CD8-positive, alpha-beta T cell (primary cell): ENCODE measurements at regions of chr19 and their contacts with region 1.

Region 1: GRCh38 chr19:4633140-4633967 is 6.0 kb upstream of the TNFAIP8L1 start:
- DNase-seq: peak in 5 of 9 experiments; percentile 30 to 69 (median 47)
- ATAC-seq: no peak
- H3K4me3 ChIP-seq: no peak overlapping the region
- H3K4me3 Mint-ChIP-seq: no peak overlapping the region
- H3K27ac ChIP-seq: no peak overlapping the region
- H3K27ac Mint-ChIP-seq: no peak overlapping the region
- H3K4me1 ChIP-seq: peaks cover 24% of the 10 kb centered on the region
- H3K4me1 Mint-ChIP-seq: peaks cover 14% of the 10 kb centered on the region
- H3K27me3 ChIP-seq: no peaks in the 10 kb centered on the region
- H3K27me3 Mint-ChIP-seq: no peaks in the 10 kb centered on the region
- CTCF ChIP-seq: peak; percentile 49

Region 2: GRCh38 chr19:4482721-4483364 is 150.5 kb before region 1 on chr19:
- CTCF ChIA-PET with region 1: no interaction called
- POLR2A ChIA-PET with region 1: no interaction called
- intact Hi-C with region 1: no loop called
- DNase-seq: no peak
- ATAC-seq: no peak
- H3K4me3 ChIP-seq: no peak overlapping the region
- H3K4me3 Mint-ChIP-seq: no peak overlapping the region
- H3K27ac ChIP-seq: no peak overlapping the region
- H3K27ac Mint-ChIP-seq: no peak overlapping the region
- H3K4me1 ChIP-seq: no peaks in the 10 kb centered on the region
- H3K4me1 Mint-ChIP-seq: no peaks in the 10 kb centered on the region
- H3K27me3 ChIP-seq: no peaks in the 10 kb centered on the region
- H3K27me3 Mint-ChIP-seq: no peaks in the 10 kb centered on the region
- CTCF ChIP-seq: no peak

Region 3: GRCh38 chr19:4576016-4576933 is 57.1 kb before region 1 on chr19:
- CTCF ChIA-PET with region 1: interaction called, 75 read pairs
- POLR2A ChIA-PET with region 1: no interaction called
- intact Hi-C with region 1: loop called in 1 of 2 experiments (anchors 1 kb)
- DNase-seq: peak; percentile 39 to 80 (median 66)
- ATAC-seq: peak; percentile 62
- H3K4me3 ChIP-seq: no peak overlapping the region
- H3K4me3 Mint-ChIP-seq: no peak overlapping the region
- H3K27ac ChIP-seq: no peak overlapping the region
- H3K27ac Mint-ChIP-seq: no peak overlapping the region
- H3K4me1 ChIP-seq: no peaks in the 10 kb centered on the region
- H3K4me1 Mint-ChIP-seq: no peaks in the 10 kb centered on the region
- H3K27me3 ChIP-seq: peaks cover 16 to 19% of the 10 kb centered on the region in 2 experiments
- H3K27me3 Mint-ChIP-seq: peaks cover 37% of the 10 kb centered on the region
- CTCF ChIP-seq: peak; percentile 19

Region 4: GRCh38 chr19:4742723-4743646 is 109.6 kb after region 1 on chr19:
- CTCF ChIA-PET with region 1: no interaction called
- POLR2A ChIA-PET with region 1: no interaction called
- intact Hi-C with region 1: no loop called
- DNase-seq: no peak
- ATAC-seq: no peak
- H3K4me3 ChIP-seq: no peak overlapping the region
- H3K4me3 Mint-ChIP-seq: no peak overlapping the region
- H3K27ac ChIP-seq: no peak overlapping the region
- H3K27ac Mint-ChIP-seq: no peak overlapping the region
- H3K4me1 ChIP-seq: no peaks in the 10 kb centered on the region
- H3K4me1 Mint-ChIP-seq: no peaks in the 10 kb centered on the region
- H3K27me3 ChIP-seq: peaks cover 0 to 2% of the 10 kb centered on the region in 2 experiments
- H3K27me3 Mint-ChIP-seq: peaks cover 21% of the 10 kb centered on the region
- CTCF ChIP-seq: no peak